ENCODE measurements at regions of chr4 and their contacts with region 1.

Region 1: DNA sequence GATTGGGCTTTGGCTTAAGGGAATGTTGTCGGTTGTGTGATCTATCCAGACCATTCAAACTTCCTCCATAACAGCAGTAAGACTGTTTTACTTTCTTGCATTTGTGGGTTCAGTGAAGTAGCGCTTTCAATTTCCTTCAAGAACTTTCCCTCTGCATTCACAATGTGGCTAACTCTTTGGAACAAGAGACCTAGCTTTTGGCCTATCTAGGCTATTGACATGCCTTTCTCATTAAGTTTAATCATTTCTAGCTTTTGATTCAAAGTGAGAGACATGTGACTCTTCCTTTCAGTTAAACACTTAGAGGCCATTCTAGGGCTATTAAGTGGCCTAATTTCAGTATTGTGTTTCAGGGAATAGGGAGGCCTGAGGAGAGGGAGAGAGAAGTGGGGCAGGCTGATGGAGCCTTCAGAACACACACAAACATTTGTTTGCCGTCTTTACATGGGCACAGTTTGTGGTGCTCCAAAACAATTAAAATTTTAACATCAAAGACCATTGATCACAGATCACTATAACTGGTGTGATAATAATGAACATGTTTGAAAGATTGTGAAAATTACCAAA is 34.1 kb downstream of the ADH5 start:
- DNase-seq: no peak
- ATAC-seq: no peak
- H3K4me3 Mint-ChIP-seq: no peak overlapping the region
- H3K27ac Mint-ChIP-seq: no peak overlapping the region
- H3K4me1 Mint-ChIP-seq: peaks cover 32% of the 10 kb centered on the region
- H3K27me3 Mint-ChIP-seq: no peaks in the 10 kb centered on the region

Region 2: DNA sequence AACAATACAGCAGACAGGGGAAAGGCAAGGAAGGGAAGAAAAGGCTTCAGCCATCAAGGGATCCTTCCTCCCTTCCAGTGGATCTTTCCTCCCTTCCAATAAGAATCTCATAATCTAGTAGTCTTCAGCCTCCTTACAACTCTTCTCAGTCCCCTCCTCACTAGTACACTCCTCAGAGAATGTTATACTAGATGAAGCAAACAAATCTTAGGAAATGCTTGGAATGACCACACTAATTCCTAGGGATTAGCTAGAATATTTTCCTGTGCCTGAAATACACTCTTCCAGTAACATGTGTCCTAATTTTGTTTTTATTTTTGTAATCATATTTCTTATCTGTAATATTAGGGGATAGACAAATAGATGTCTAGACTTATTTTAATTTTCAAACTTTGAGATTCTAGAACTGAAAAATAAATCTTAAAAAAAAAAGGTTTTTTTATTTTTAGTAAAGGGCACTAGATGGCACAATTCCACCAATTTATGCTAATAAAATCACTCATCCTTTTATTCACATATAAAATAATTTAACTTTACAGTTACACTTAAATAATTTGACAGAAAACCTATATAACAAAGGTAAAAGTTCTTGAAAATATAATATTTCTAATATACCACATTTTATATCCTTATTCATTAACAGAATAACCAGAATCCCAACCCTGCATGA is 904.3 kb before region 1 on chr4:
- CTCF ChIA-PET with region 1: interaction called, 12 read pairs
- POLR2A ChIA-PET with region 1: no interaction called
- DNase-seq: no peak
- ATAC-seq: no peak
- H3K4me3 Mint-ChIP-seq: no peak overlapping the region
- H3K27ac Mint-ChIP-seq: no peak overlapping the region
- H3K4me1 Mint-ChIP-seq: peaks cover 23% of the 10 kb centered on the region
- H3K27me3 Mint-ChIP-seq: peaks cover 6% of the 10 kb centered on the region

Region 3: DNA sequence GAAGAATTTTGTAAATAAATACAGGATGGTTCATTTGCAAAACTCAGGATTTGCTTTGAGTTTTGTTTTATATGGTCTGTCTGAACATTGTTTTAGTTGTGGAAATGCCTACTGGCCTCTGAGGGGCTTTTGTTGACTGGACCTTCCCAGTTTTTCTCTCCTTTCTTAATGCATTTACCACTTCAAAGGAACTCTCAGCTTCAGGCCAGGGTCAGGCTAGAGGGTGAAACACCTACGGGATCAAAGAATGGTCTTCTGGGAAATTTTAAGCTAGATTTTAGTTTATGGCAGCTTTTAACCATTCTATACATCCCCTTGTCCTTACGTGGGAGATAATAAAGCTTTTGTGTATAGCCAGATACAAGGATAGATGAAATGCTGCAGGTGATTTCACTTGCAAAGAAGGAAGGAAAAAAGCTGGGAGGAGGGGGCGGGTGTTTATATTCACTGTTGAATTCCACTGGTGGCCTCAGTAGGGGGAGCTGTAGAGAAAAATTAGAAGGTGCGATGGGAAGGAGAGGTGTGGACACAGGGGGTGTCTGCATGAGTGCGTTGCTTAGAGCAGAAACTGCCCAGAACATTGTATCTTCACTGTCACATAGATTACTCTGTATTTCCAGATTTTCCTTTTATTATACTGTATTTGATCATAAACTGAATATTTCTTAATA is 547.9 kb before region 1 on chr4:
- CTCF ChIA-PET with region 1: no interaction called
- POLR2A ChIA-PET with region 1: no interaction called
- DNase-seq: no peak
- ATAC-seq: no peak
- H3K4me3 Mint-ChIP-seq: no peak overlapping the region
- H3K27ac Mint-ChIP-seq: no peak overlapping the region
- H3K4me1 Mint-ChIP-seq: peaks cover 26% of the 10 kb centered on the region
- H3K27me3 Mint-ChIP-seq: no peaks in the 10 kb centered on the region

Region 4: DNA sequence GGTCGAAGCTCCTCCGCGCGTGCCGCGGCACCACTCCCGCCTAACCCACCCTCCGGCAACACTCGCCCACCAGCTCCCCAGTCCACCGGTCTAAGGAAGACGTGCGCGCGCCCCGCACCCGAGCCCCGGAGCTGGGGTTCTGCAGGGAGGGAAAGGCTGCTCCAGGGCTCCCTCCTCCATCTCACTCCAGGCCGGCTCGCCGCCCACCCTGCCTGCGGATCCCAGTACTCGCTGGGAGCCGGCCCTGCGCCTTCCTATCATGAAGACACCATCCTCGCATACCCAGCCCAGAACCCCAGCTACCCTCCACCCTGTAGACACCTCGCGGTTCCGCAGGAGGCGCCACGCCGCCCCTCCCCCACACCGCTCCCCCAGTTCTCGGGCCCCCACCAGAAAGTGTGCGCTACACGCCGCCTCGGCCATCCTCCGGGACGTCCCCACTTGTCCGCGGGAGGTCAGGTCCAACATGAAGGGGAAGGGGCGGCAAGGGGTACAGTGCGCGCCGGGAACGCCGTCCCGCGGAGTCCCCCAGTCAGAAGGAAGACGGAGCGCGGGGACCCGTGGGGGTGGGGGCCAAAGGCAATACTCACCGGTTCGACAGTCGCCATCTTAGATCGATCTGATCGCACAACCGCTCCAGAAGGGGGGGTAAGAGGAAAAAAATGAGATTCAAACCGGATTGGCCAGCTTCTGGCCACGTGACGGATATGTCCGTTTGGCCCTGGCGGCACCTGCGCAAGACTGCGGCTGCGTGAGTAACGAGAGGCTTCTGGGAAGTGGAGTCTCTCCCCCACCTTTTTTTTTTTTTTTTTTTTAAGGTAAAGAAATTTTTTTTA is 125.8 kb before region 1 on chr4 and contains the start of gene EIF4E:
- CTCF ChIA-PET with region 1: interaction called, 4 read pairs
- POLR2A ChIA-PET with region 1: interaction called, 10 read pairs
- DNase-seq: peak; percentile 98
- ATAC-seq: peak; percentile 81
- H3K4me3 Mint-ChIP-seq: peak within 1 kb of the TSS; percentile 90
- H3K27ac Mint-ChIP-seq: peak within 1 kb of the TSS; percentile 96
- H3K4me1 Mint-ChIP-seq: peaks cover 46% of the 10 kb centered on the region
- H3K27me3 Mint-ChIP-seq: no peaks in the 10 kb centered on the region
- total RNA-seq, gene EIF4E: 103 to 105 TPM

Region 5: DNA sequence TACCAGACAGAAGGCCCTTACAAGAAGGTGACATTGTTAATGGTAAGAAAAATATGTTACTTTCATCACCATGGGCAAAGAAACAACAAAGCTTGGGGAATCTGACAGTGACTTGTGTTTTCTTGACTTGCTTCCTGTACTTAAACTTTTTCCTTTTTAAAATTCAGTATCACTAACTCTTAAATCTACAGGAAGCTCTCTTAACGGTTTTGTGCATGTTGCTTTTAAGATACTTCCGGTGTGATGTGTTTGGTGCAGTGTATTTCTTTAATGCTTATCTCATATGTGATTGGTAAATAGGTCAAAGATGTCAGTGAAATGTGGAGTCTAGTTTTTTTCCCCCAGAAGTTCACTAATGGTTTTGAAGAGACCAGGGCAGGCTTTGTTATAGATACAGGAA is 11.2 kb before region 1 on chr4:
- CTCF ChIA-PET with region 1: interaction called, 14 read pairs
- POLR2A ChIA-PET with region 1: interaction called, 4 read pairs
- DNase-seq: no peak
- ATAC-seq: peak; percentile 77
- H3K4me3 Mint-ChIP-seq: peak overlapping the region; percentile 46
- H3K27ac Mint-ChIP-seq: peak overlapping the region; percentile 89
- H3K4me1 Mint-ChIP-seq: peaks cover 17% of the 10 kb centered on the region
- H3K27me3 Mint-ChIP-seq: no peaks in the 10 kb centered on the region

Region 6: DNA sequence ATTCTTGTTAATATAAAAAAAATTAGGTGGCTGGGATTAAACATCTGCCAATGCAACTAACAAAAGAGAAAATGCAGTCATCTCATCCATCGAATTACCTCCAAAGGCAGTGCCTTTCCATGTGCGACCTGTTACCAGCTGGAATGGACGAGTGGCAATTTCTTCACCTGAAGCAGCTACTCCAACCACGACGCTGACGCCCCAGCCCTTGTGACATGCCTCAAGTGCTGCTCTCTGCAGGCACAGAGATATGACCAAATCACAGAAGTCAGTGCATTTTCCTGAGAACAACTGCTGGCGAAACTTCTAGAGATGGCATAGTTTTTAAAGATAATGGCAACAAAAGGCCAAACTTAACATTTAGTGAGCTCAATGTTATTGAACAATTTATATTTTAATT is 20.3 kb after region 1 on chr4:
- CTCF ChIA-PET with region 1: interaction called, 21 read pairs
- POLR2A ChIA-PET with region 1: interaction called, 4 read pairs
- DNase-seq: no peak
- ATAC-seq: no peak
- H3K4me3 Mint-ChIP-seq: no peak overlapping the region
- H3K27ac Mint-ChIP-seq: no peak overlapping the region
- H3K4me1 Mint-ChIP-seq: no peaks in the 10 kb centered on the region
- H3K27me3 Mint-ChIP-seq: no peaks in the 10 kb centered on the region

Region 7: DNA sequence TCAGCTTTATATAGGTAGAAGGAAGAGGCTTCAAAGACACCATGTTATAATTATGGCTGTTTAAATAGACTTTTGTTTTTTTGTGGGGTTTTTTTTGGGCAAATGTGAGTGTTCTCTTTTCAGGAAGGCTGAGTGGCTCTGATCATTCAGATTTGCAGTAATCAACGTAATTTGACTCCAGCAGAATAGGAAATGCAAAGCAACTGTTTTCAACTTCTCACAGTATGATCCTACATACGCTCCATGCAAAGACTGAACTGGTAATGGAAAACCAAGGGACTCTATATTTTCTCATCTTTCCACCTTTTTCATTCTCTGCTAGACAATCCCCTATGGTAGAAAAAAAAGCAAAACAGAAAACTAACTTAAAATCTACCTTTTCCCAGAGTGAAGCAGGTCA is 255.9 kb after region 1 on chr4:
- CTCF ChIA-PET with region 1: no interaction called
- POLR2A ChIA-PET with region 1: no interaction called
- DNase-seq: no peak
- ATAC-seq: no peak
- H3K4me3 Mint-ChIP-seq: no peak overlapping the region
- H3K27ac Mint-ChIP-seq: no peak overlapping the region
- H3K4me1 Mint-ChIP-seq: no peaks in the 10 kb centered on the region
- H3K27me3 Mint-ChIP-seq: peaks cover 3% of the 10 kb centered on the region

Measured in activated CD8-positive, alpha-beta T cell treated with anti-CD3 and anti-CD28 coated beads, Interleukin-2, amount 10 ng/mL, durations not matched to agents 7 days and 5 days (primary cell).